AG04450 (cell line): ENCODE measurements at regions of chr15 and their contacts with region 1.

Region 1: GRCh38 chr15:88904624-88905327 is 8.4 kb downstream of the MFGE8 start:
- DNase-seq: no peak
- H3K4me3 ChIP-seq: no peak overlapping the region
- H3K27ac ChIP-seq: no peak overlapping the region
- H3K27me3 ChIP-seq: no peaks in the 10 kb centered on the region
- CTCF ChIP-seq: peak; percentile 99

Region 2: GRCh38 chr15:87245592-87245991 is 1659.2 kb before region 1 on chr15:
- CTCF ChIA-PET with region 1: no interaction called
- POLR2A ChIA-PET with region 1: no interaction called
- DNase-seq: no peak
- H3K4me3 ChIP-seq: no peak overlapping the region
- H3K27ac ChIP-seq: no peak overlapping the region
- H3K27me3 ChIP-seq: no peaks in the 10 kb centered on the region
- CTCF ChIP-seq: no peak

Region 3: DNA sequence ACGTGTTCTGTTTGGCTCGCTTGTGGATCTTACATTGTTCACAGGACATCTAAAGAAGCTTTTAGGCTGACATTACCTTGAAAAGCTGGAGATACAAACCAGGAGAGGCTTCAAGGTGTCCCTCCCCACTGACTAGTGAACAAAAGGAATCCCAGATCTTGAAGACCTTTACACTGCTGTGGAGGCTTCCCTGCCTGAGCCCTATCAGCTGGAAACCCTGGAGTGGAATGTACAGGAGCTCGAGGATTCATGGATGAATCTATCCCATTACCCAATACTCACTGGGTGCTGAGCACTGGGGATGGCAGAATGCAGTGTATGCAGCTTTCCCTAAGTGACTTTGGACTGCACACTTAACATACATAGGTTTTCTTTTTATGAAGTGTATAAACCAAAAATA is 90.7 kb after region 1 on chr15:
- CTCF ChIA-PET with region 1: interaction called, 10 read pairs
- POLR2A ChIA-PET with region 1: no interaction called
- DNase-seq: no peak
- H3K4me3 ChIP-seq: no peak overlapping the region
- H3K27ac ChIP-seq: no peak overlapping the region
- H3K27me3 ChIP-seq: no peaks in the 10 kb centered on the region
- CTCF ChIP-seq: no peak

Region 4: GRCh38 chr15:89017370-89018066 is 112.7 kb after region 1 on chr15:
- CTCF ChIA-PET with region 1: interaction called, 85 read pairs
- POLR2A ChIA-PET with region 1: no interaction called
- DNase-seq: peak; percentile 48
- H3K4me3 ChIP-seq: peak overlapping the region; percentile 56
- H3K27ac ChIP-seq: peak overlapping the region; percentile 43
- H3K27me3 ChIP-seq: no peaks in the 10 kb centered on the region
- CTCF ChIP-seq: peak; percentile 91

Region 5: DNA sequence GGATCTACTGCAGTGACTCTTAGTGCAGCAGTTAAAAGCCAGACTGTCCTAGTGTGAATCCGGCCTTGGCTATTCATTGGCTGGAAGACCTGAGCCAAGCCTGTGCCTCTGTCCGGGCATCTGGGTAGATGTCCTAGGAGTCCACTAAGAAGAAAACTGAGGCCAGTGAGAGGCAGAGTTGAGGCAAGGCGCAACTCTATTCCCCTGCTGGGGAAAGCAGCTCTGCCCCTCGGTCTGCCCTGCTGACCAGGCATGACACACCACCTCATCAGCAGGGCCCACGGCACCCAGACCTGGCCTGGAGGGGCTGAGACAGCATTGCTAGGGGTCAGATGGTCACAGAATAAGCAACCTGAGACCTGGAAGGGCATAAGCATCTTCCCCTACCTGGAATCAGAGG is 136.7 kb after region 1 on chr15:
- CTCF ChIA-PET with region 1: interaction called, 15 read pairs
- POLR2A ChIA-PET with region 1: no interaction called
- DNase-seq: no peak
- H3K4me3 ChIP-seq: no peak overlapping the region
- H3K27ac ChIP-seq: no peak overlapping the region
- H3K27me3 ChIP-seq: no peaks in the 10 kb centered on the region
- CTCF ChIP-seq: no peak

Region 6: DNA sequence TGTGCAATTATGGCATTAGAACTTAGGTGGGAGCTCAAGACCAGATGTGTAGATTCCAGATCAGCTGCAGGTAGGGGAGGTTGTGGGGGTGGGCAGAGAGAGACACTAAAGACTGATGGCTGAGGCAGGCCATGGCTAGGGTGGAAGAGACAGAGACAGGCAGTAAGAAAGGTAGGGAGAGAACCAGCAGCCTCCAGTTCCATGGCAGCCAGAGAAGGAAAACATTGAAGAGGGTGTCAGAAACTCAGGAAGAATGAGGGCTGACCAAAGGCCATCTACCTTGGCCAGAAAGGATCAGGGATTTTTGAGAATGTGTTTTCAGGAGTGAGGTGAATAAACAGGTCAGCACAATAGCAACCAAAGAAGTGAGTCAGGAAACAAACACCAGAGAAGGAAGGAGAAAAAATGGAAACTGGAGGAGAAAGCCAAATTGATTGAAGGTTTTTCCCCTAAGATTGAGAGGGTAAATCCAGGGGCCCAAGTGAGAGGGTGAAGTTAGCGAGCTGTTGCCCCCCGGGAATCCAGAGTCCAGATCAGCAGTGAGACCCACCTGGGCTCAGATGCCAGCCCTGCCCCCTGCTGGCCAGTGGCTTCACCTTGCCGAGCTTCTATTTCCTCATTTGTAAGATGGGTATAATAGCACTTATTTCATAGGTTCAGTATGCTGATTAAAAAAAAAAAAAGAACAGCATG is 224.5 kb after region 1 on chr15:
- CTCF ChIA-PET with region 1: interaction called, 10 read pairs
- POLR2A ChIA-PET with region 1: no interaction called
- DNase-seq: no peak
- H3K4me3 ChIP-seq: no peak overlapping the region
- H3K27ac ChIP-seq: no peak overlapping the region
- H3K27me3 ChIP-seq: no peaks in the 10 kb centered on the region
- CTCF ChIP-seq: peak; percentile 73

Region 7: DNA sequence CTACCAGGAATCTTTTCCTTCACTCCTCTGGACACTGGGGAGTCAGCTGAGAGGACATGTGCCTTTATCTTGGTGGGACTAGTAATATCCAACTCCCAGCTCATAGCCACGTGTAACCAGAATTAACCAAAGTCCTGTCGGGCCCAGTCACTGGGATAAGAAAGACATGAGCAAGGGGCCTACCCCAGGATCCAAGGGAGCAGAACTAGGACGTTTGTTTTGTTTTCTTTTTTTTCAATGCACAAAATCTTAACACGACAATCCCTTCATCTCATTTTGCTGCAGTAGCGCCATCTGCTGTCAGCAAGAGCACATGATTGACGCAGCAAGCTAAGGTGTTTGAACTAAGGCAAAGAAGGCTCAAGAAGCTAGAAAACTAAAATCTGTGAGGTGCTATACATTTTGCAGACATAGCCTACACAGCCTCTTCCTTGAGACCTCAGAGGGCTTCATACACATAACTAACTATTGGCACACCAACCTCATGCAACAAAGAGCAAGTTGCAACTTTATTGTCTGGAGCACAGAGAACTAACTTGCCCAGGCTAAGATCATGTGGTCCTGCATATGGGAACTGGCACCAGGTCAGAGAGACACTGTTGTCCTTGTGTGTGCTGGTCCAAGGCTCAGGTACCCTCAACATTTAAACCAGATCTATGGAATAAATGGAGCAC is 273.0 kb after region 1 on chr15:
- CTCF ChIA-PET with region 1: interaction called, 58 read pairs
- POLR2A ChIA-PET with region 1: no interaction called
- DNase-seq: peak; percentile 57
- H3K4me3 ChIP-seq: no peak overlapping the region
- H3K27ac ChIP-seq: no peak overlapping the region
- H3K27me3 ChIP-seq: no peaks in the 10 kb centered on the region
- CTCF ChIP-seq: peak; percentile 88